WTC11 (cell line): ENCODE measurements at regions of chr6 and their contacts with region 1.

Region 1: DNA sequence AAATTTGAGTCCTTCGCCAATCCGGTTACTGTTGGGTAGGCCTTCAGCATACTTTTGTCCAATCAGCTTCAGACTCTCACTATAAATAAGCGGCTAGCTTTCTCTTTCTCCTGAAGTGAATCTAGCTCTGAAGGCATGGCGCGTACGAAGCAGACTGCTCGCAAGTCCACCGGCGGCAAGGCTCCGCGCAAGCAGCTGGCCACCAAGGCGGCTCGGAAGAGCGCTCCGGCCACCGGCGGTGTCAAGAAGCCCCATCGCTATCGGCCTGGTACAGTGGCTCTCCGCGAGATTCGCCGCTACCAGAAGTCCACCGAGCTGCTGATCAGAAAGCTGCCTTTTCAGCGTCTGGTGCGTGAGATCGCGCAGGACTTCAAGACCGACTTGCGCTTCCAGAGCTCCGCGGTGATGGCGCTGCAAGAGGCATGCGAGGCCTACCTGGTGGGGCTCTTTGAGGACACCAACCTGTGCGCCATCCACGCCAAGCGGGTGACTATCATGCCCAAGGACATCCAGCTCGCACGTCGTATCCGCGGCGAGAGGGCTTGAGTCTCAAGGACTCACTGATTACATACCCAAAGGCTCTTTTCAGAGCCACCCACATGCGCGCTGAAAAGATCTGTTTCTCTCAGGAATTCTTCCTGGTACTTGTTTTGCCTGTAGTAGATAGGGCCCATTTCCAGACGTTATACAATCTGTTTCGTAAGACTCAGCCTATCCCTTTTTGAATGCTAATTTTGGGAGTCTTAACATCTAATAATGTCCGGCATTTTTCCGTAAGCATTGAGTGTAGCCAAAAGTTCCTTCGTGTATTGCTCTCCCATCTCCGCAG is 102.0 kb downstream of the OR2B2 start:
- DNase-seq: peak; percentile 58
- ATAC-seq: peak; percentile 7
- H3K4me3 Mint-ChIP-seq: peak overlapping the region; percentile 98
- H3K27ac Mint-ChIP-seq: peak overlapping the region; percentile 98
- H3K4me1 Mint-ChIP-seq: peaks cover 45% of the 10 kb centered on the region
- H3K27me3 Mint-ChIP-seq: peaks cover 3% of the 10 kb centered on the region
- CTCF ChIP-seq: no peak

Region 2: GRCh38 chr6:27132532-27133280 is 677.4 kb before region 1 on chr6:
- CTCF ChIA-PET with region 1: no interaction called
- POLR2A ChIA-PET with region 1: interaction called, 63 read pairs
- DNase-seq: peak; percentile 85
- ATAC-seq: peak; percentile 86
- H3K4me3 Mint-ChIP-seq: no peak overlapping the region
- H3K27ac Mint-ChIP-seq: no peak overlapping the region
- H3K4me1 Mint-ChIP-seq: peaks cover 65% of the 10 kb centered on the region
- H3K27me3 Mint-ChIP-seq: no peaks in the 10 kb centered on the region
- CTCF ChIP-seq: no peak

Region 3: GRCh38 chr6:27492631-27493190 is 317.4 kb before region 1 on chr6:
- CTCF ChIA-PET with region 1: no interaction called
- POLR2A ChIA-PET with region 1: no interaction called
- DNase-seq: no peak
- ATAC-seq: no peak
- H3K4me3 Mint-ChIP-seq: no peak overlapping the region
- H3K27ac Mint-ChIP-seq: no peak overlapping the region
- H3K4me1 Mint-ChIP-seq: peaks cover 7% of the 10 kb centered on the region; the same call in 1 of the 2 replicates
- H3K27me3 Mint-ChIP-seq: peaks cover 14% of the 10 kb centered on the region
- CTCF ChIP-seq: no peak

Region 4: DNA sequence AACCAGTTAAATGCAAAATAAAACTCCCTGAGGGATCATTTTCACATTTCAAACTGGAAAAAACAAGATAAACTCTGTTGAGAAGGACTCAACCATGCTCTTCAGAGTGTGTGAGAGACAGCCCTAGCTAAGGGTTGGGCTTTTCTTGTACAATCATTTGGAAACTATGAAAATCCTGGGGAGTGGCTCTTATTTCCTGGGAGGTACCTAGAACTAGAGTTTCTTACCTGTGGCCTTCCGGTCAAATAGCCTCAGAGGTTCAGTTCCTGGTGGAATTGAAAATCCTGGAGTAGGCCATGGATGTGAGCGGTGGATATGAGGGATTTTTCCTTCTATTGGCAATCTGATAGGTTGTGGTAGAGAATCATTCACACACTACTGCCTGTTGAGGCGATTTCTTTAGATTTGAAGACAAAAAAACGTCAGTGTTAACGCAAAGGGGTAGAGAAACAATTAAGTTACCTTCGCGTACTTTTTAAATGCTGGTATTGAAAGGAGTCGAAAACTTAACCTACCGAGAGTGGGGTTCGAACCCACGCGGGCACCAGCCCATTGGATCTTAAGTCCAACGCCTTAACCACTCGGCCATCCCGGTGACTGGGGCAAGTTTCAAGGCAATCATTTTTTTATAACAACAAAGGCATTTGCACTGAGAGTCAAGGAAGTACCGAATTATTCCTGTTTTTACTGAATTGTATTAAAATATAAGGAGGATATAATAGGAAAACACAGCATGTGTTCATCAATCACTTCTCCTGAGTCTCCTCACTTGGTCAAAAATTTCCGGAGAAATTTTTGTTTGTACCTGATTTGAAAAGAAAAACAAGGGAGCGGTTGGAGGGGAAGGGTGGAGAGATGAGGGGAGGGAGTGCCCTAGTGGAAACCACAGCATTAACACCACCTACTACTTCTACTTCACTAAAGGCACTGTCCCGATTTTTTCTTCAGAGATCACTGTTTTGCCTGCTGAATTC is 89.3 kb before region 1 on chr6:
- CTCF ChIA-PET with region 1: no interaction called
- POLR2A ChIA-PET with region 1: no interaction called
- DNase-seq: peak; percentile 72
- ATAC-seq: peak; percentile 89
- H3K4me3 Mint-ChIP-seq: peak overlapping the region; percentile 85
- H3K27ac Mint-ChIP-seq: no peak overlapping the region
- H3K4me1 Mint-ChIP-seq: peaks cover 17% of the 10 kb centered on the region
- H3K27me3 Mint-ChIP-seq: peaks cover 9% of the 10 kb centered on the region
- CTCF ChIP-seq: no peak

Region 5: DNA sequence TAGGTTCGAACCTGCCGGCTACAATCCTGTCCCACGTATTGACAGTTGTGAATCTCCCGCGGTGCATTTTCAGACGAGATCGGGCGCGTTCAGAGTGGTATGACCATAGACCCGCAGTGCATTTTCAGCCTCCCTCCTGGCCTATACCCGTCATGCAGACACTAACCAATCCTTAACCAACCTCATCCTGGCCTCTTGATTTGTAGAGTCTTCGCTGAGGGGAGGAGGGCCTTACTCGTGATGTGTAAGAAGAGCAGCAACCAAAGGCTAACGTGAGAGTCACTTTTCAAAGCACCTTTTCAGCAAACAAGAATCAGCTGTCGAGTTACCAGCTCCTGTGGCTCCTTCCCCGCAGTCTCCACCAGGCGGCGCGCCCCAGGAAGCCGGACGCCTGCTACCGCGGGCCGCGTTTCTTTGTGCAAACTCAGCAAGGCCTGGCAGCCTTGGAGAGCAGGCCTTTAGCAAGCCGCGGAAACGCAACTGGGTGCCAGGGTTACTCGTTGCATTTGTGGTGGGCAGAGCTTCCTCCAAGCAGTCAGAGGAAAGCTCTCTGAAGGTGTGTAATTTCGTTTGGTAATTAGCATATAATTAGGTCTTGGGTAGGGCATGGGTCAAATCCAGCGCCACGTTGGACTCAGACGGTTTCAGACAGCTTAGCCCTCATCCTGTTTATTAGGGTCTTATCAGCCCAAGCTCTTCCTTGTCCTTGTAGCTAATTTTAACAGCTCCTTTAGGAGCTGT is 37.7 kb before region 1 on chr6:
- CTCF ChIA-PET with region 1: interaction called, 5 read pairs
- POLR2A ChIA-PET with region 1: interaction called, 16 read pairs
- DNase-seq: peak; percentile 89
- ATAC-seq: peak; percentile 82
- H3K4me3 Mint-ChIP-seq: peak overlapping the region; percentile 59
- H3K27ac Mint-ChIP-seq: no peak overlapping the region; the same call in 1 of the 2 replicates
- H3K4me1 Mint-ChIP-seq: peaks cover 35% of the 10 kb centered on the region
- H3K27me3 Mint-ChIP-seq: peaks cover 100% of the 10 kb centered on the region
- CTCF ChIP-seq: peak; percentile 87

Region 6: GRCh38 chr6:27795697-27796494 is 14.3 kb before region 1 on chr6:
- CTCF ChIA-PET with region 1: interaction called, 16 read pairs
- POLR2A ChIA-PET with region 1: interaction called, 17 read pairs
- DNase-seq: no peak
- ATAC-seq: peak; percentile 29
- H3K4me3 Mint-ChIP-seq: peak overlapping the region; percentile 29
- H3K27ac Mint-ChIP-seq: peak overlapping the region; percentile 92
- H3K4me1 Mint-ChIP-seq: peaks cover 15% of the 10 kb centered on the region
- H3K27me3 Mint-ChIP-seq: peaks cover 12% of the 10 kb centered on the region
- CTCF ChIP-seq: peak; percentile 82

Region 7: DNA sequence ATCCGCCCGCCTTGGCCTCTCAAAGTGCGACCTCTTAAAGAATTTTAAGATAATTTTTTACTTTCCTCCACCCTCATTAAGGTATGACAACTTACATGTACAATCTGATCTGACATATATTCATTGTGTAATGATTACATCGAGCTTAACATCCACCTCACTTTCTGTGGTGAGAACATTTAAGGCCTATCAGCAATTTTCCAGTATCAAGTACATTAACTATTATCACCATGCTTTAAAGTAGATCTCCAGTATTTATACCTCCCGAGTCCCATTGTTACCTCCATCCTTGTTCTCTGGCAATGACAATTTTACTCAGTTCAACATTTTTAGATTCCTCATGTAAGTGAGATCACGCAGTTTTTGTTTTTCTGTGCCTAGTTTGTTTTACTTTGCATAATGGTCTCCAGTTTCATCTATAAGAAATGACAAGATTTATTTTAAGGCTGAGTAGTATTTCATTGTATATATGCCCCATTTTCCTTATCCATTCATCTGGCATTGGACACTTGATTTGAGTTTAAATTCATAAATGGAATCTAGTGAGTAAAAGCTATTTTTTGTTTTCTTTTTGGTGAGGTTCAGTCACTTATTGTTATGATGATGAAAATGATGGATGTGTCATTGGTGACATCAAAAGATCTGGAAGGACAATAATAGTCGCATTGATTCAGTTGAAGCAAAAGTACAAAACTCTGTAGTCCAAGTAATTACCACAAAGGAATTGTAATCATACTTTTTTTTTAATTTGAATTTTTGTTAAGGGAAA is 15.1 kb after region 1 on chr6:
- CTCF ChIA-PET with region 1: no interaction called
- POLR2A ChIA-PET with region 1: interaction called, 71 read pairs
- DNase-seq: no peak
- ATAC-seq: no peak
- H3K4me3 Mint-ChIP-seq: peak overlapping the region; percentile 86
- H3K27ac Mint-ChIP-seq: peak overlapping the region; percentile 99
- H3K4me1 Mint-ChIP-seq: peaks cover 27% of the 10 kb centered on the region
- H3K27me3 Mint-ChIP-seq: no peaks in the 10 kb centered on the region
- CTCF ChIP-seq: no peak

Region 8: GRCh38 chr6:27838058-27838944 is 28.1 kb after region 1 on chr6:
- CTCF ChIA-PET with region 1: no interaction called
- POLR2A ChIA-PET with region 1: interaction called, 203 read pairs
- DNase-seq: peak; percentile 84
- ATAC-seq: peak; percentile 84
- H3K4me3 Mint-ChIP-seq: no peak overlapping the region
- H3K27ac Mint-ChIP-seq: no peak overlapping the region
- H3K4me1 Mint-ChIP-seq: peaks cover 28% of the 10 kb centered on the region
- H3K27me3 Mint-ChIP-seq: no peaks in the 10 kb centered on the region
- CTCF ChIP-seq: no peak

Region 9: DNA sequence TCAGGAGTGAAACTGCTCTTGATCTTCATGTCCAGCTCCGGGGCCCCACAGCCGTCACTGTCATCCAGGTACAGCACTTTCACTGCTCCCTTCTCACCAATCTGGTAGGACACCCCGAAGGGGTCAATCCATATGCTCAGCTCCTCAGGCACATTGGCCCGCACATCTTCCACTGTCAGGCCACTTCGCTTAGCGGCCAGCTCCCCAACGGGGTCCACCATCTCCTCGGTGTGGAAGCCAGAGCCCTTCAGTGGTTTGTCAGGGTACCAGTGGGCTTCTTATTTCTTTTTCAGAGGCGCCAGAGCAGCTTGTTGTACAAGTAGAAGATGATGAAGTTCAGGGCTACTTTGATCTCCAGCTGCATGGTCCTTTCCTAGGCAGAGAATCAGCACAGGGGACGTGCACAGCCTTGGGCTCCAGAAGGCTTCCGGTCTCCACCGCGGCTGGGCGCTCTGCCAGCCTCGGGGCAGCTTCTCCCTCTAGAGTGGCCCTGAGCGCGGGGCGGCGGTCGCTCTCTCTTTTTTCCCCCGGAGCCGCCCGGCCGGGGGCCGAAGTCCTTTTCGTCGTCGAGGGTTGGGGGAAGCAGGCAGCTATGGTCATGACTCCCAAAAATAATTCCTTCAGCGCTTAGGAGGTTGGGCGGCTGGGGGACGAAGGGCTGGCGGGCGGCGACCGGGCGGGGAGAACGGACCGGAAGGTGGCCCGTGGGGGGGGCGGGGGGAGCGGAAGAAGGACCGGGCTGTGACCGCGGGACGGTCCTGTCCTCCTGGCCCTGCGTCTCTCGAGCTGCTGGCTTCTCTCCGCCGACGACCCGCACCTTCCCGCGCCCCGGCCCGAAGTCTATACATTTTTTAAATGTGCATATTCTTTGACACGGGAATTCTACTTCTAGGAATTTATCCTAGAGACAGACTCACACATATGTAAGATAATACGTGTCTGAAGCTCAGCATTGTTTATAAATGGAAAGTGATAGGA is 408.4 kb after region 1 on chr6:
- CTCF ChIA-PET with region 1: no interaction called
- POLR2A ChIA-PET with region 1: no interaction called
- DNase-seq: peak; percentile 54
- ATAC-seq: peak; percentile 85
- H3K4me3 Mint-ChIP-seq: peak overlapping the region; percentile 71
- H3K27ac Mint-ChIP-seq: no peak overlapping the region
- H3K4me1 Mint-ChIP-seq: peaks cover 24% of the 10 kb centered on the region
- H3K27me3 Mint-ChIP-seq: peaks cover 94% of the 10 kb centered on the region
- CTCF ChIP-seq: no peak